ENCODE measurements at regions of chr18 and their contacts with region 1.

Region 1: DNA sequence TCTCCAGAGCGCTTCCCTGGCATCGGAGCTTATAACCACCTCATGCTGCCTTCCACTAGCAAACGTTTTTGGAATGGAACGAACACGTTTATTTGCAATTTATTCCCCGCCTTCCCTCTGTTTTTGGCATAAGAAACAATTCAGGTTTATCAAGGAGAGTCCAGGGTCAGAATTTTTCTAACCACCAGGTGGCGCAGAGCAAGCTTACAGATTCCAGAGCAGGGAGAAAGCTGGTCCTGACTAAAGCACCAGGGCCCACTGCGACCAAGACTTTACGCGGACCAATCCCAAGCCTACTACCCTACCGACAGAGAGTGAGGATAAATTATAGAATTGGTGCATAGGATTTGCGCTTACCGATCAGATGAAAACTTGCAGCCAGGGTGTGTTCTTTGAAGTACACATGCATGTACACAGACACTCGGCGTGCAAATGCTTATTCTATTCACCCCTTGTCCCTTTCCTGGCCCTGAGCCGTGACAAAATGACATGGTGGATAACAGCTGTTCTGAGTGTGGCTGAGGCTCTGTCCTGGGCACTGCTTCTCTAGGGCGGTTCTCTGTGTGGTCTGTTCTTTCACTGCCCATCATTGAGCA is 34.7 kb downstream of the NAPG start:
- DNase-seq: peak; percentile 53
- H3K4me3 ChIP-seq: peak overlapping the region; percentile 31; the same call in 1 of the 2 replicates
- H3K27ac ChIP-seq: no peak overlapping the region
- H3K27me3 ChIP-seq: no peaks in the 10 kb centered on the region
- CTCF ChIP-seq: peak; percentile 82

Region 2: GRCh38 chr18:10304853-10305252 is 255.7 kb before region 1 on chr18:
- CTCF ChIA-PET with region 1: no interaction called
- POLR2A ChIA-PET with region 1: no interaction called
- DNase-seq: no peak
- H3K4me3 ChIP-seq: no peak overlapping the region
- H3K27ac ChIP-seq: no peak overlapping the region
- H3K27me3 ChIP-seq: no peaks in the 10 kb centered on the region
- CTCF ChIP-seq: no peak

Region 3: DNA sequence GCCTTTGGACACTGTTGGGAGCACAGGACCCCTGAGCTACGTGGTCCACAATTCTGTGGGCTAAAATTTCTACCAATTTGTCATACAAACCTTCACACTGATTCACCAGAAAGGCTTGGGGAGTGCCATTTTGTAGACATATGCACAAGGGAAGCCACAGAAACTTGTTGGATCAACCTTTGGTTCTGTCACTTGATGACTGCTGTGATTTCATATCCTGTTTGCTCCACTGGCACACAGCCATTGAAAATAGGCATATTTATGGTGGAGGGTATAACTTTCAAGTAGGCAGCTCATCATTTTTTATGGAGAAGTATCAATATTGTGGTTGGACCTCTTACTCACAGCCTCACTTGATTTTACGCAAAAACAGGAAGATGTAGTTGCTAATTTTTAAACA is 24.3 kb before region 1 on chr18:
- CTCF ChIA-PET with region 1: interaction called, 11 read pairs
- POLR2A ChIA-PET with region 1: no interaction called
- DNase-seq: no peak
- H3K4me3 ChIP-seq: no peak overlapping the region
- H3K27ac ChIP-seq: no peak overlapping the region
- H3K27me3 ChIP-seq: no peaks in the 10 kb centered on the region
- CTCF ChIP-seq: no peak

Region 4: DNA sequence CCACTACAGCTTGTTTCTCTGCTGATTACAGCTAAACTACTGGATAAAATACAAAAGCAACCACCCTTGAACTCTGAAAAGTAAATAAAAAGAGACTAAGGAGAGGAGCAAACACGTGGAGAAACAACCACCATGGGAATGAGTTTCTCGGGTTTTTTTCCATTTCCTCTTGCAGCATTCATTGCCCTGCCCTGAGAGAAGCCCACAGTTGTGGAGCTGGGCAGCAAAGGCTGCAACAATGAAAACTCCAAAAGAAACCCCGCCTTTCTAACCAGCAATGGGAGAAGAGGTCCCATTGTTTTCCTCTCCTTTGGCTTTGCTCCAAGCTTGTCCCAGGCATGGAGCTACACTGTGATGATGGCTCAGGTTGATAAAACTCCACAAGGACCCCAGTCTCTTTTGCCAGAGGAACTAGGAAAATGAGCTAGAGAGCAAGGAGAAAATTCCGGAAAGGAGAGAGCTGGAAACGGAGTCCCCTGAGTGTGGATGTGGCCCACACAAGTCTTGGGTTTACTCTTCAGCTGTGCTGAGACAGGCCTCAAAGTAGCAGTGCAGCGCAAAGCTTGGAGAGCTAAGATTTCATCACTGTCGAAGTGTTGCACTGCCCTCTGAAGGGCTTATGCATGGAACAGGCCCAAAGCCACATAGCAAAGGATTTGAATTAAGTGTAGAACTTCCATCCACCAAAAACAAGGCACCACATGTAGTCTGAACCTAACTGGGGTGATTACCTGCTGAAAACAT is 13.8 kb before region 1 on chr18:
- CTCF ChIA-PET with region 1: interaction called, 52 read pairs
- POLR2A ChIA-PET with region 1: no interaction called
- DNase-seq: no peak
- H3K4me3 ChIP-seq: no peak overlapping the region
- H3K27ac ChIP-seq: no peak overlapping the region
- H3K27me3 ChIP-seq: no peaks in the 10 kb centered on the region
- CTCF ChIP-seq: no peak

Region 5: DNA sequence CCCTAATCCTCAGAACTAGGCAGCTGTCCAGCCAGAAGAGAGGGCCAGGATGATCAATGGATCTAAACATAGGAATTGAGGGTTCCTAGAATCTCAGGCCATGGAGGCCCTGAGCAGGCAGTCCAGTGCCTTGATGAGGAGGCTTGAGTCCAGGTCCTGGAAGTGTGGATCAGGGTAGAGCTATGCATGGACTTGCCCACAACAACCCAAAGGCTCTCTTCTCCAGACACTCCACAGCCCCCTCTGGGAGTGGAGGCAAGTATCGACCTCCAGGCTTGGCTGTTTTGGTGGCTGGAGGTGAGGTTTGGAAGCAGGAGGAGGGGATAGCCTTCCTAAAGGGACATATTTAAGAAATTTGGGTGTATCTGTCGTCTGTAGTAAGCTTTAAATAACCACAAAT is 11.0 kb after region 1 on chr18:
- CTCF ChIA-PET with region 1: interaction called, 10 read pairs
- POLR2A ChIA-PET with region 1: no interaction called
- DNase-seq: no peak
- H3K4me3 ChIP-seq: no peak overlapping the region
- H3K27ac ChIP-seq: no peak overlapping the region
- H3K27me3 ChIP-seq: no peaks in the 10 kb centered on the region
- CTCF ChIP-seq: no peak

Region 6: DNA sequence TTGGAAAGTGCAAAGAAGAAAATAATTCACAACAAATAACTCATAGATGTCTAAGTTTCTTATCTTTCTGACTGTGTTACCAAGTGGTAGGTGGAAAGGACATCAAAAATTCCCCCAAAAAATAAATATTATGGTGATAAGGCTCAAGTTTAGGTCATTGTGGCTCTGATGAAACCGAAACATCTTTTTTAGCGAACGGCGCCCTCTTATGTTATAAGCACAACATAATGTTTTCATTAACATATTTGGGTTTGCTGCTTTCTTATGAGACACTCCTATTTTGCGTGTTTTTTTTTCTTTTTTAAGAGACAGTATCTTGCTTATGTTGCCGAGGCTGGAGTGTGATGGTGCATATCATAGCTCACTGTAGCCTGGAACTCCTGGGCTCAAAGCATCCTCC is 1010.2 kb after region 1 on chr18:
- CTCF ChIA-PET with region 1: interaction called, 11 read pairs
- POLR2A ChIA-PET with region 1: no interaction called
- DNase-seq: no peak
- H3K4me3 ChIP-seq: no peak overlapping the region
- H3K27ac ChIP-seq: no peak overlapping the region
- H3K27me3 ChIP-seq: peaks cover 8% of the 10 kb centered on the region
- CTCF ChIP-seq: peak; percentile 35; the same call in 1 of the 2 replicates

Measured in AG04450 (cell line).